ENCODE measurements at regions of chr4 and their contacts with region 1.

Region 1: GRCh38 chr4:82428969-82429727 is 1.1 kb downstream of the HNRNPDL start:
- DNase-seq: peak; percentile 96
- ATAC-seq: peak; percentile 55
- H3K4me3 Mint-ChIP-seq: peak overlapping the region; percentile 94
- H3K27ac Mint-ChIP-seq: peak overlapping the region; percentile 99
- H3K4me1 Mint-ChIP-seq: peaks cover 50% of the 10 kb centered on the region
- H3K27me3 Mint-ChIP-seq: no peaks in the 10 kb centered on the region

Region 2: DNA sequence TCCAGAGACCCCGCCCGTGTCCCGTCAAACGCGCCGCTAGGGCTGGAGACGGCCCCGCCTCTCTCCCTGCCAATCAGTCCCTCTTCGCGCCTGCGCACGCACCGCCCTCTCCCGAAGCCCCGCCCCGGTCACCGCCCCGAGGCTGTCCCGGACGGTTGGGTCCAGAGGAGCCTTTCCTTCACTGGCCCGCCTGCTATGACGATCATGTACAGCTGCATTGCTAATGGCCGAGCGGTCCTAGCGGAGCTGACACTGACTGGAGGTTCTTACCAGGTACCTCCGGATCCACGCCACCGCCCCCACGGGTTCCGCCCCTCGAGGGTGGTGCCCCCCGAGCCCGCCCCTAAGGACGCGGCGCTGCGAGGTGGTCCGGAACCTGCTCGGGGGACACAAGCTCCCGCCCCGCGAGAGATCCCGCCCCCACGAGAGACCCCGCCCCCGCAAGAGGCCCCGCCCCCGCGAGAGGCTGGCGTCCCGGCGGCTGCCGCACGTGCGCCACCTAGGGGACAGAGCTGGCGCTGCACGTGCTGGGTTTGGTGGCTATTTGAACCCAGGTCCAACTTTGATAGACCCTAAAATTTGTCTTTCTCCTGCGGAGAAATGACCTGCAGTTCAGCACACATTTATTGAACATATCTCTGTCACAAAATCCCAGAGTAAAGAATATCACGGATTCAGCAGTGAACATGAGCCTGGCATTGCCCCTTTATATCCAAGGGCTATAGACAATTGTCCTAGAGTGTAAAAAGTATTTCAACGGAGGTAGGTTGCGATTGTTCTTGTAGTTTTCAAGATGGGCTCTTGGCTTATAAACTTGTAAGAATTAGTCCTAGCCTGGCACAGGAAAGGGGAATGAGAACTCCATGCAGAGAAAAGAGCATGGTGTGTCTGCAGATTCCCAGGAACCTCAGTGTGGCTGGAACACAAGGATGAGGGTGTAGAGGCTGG is 144.0 kb before region 1 on chr4:
- CTCF ChIA-PET with region 1: interaction called, 5 read pairs
- POLR2A ChIA-PET with region 1: interaction called, 4 read pairs
- intact Hi-C with region 1: loop called (anchors 1 to 2 kb)
- DNase-seq: peak; percentile 100
- ATAC-seq: peak; percentile 99
- H3K4me3 Mint-ChIP-seq: peak overlapping the region; percentile 68
- H3K27ac Mint-ChIP-seq: peak overlapping the region; percentile 62
- H3K4me1 Mint-ChIP-seq: peaks cover 13% of the 10 kb centered on the region
- H3K27me3 Mint-ChIP-seq: no peaks in the 10 kb centered on the region

Region 3: GRCh38 chr4:82373816-82374625 is 55.1 kb before region 1 on chr4 and contains the start of gene HNRNPD:
- CTCF ChIA-PET with region 1: interaction called, 14 read pairs
- POLR2A ChIA-PET with region 1: interaction called, 38 read pairs
- intact Hi-C with region 1: loop called (anchors 1 kb)
- DNase-seq: peak; percentile 97
- ATAC-seq: peak; percentile 90
- H3K4me3 Mint-ChIP-seq: peak within 1 kb of the TSS; percentile 89
- H3K27ac Mint-ChIP-seq: peak within 1 kb of the TSS; percentile 99
- H3K4me1 Mint-ChIP-seq: peaks cover 34% of the 10 kb centered on the region
- H3K27me3 Mint-ChIP-seq: no peaks in the 10 kb centered on the region
- total RNA-seq, gene HNRNPD: 505 to 510 TPM

Region 4: GRCh38 chr4:82543124-82543523 is 114.0 kb after region 1 on chr4:
- CTCF ChIA-PET with region 1: no interaction called
- POLR2A ChIA-PET with region 1: no interaction called
- intact Hi-C with region 1: no loop called
- DNase-seq: no peak
- ATAC-seq: no peak
- H3K4me3 Mint-ChIP-seq: no peak overlapping the region
- H3K27ac Mint-ChIP-seq: no peak overlapping the region
- H3K4me1 Mint-ChIP-seq: no peaks in the 10 kb centered on the region
- H3K27me3 Mint-ChIP-seq: peaks cover 8% of the 10 kb centered on the region

Region 5: GRCh38 chr4:82890901-82891706 is 462.0 kb after region 1 on chr4 and contains the start of gene SEC31A:
- CTCF ChIA-PET with region 1: no interaction called
- POLR2A ChIA-PET with region 1: no interaction called
- intact Hi-C with region 1: loop called in 1 of 2 experiments (anchors 1 kb)
- DNase-seq: peak; percentile 99
- ATAC-seq: peak; percentile 94
- H3K4me3 Mint-ChIP-seq: peak within 1 kb of the TSS; percentile 81
- H3K27ac Mint-ChIP-seq: peak within 1 kb of the TSS; percentile 89
- H3K4me1 Mint-ChIP-seq: peaks cover 42% of the 10 kb centered on the region
- H3K27me3 Mint-ChIP-seq: no peaks in the 10 kb centered on the region
- total RNA-seq, gene SEC31A: 80.3 to 124 TPM

Region 6: DNA sequence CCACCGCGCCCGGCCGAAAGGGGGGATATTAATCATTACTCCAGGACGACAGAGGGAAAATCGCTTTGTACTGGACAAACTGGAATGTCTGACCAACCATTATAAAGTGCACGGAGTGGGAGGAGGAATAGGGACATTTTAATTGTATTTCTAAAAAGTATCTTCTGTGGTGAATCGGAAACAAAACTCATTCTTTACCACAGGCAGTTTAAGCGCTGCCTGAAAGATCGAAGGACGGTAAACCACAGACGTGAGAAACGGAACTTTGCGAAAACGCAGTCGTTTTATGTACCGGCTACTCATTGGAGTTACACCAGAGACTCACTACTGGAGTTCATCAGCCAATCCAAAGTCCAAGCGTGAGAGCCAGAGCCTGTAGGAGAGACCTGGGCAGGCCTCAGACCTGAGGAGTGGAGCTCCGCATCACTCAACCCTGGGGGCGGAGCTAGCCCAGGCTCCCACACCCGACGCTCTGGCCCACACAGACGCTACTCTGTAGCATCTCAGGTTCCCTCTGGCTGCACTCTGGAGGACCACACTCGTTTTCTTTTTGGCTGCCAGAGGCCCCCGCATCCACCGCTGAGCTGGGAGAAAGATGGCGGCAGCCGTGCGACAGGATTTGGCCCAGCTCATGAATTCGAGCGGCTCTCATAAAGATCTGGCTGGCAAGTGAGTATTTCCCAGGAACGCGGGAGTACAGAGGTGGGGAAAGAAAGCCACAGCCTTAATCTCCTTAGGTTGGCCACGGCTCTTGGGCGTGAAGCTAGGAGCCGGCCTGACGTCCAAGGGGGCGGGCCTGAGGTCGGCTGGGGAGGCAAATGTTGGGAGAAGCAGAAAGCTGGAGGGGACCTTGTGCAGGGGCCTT is 605.7 kb after region 1 on chr4 and contains the start of gene COPS4:
- CTCF ChIA-PET with region 1: no interaction called
- POLR2A ChIA-PET with region 1: interaction called, 3 read pairs
- intact Hi-C with region 1: loop called in 1 of 2 experiments (anchors 1 kb)
- DNase-seq: peak; percentile 97
- ATAC-seq: peak; percentile 97
- H3K4me3 Mint-ChIP-seq: peak within 1 kb of the TSS; percentile 91
- H3K27ac Mint-ChIP-seq: peak within 1 kb of the TSS; percentile 94
- H3K4me1 Mint-ChIP-seq: peaks cover 22% of the 10 kb centered on the region
- H3K27me3 Mint-ChIP-seq: no peaks in the 10 kb centered on the region
- total RNA-seq, gene COPS4: 35.7 to 35.9 TPM

Region 7: DNA sequence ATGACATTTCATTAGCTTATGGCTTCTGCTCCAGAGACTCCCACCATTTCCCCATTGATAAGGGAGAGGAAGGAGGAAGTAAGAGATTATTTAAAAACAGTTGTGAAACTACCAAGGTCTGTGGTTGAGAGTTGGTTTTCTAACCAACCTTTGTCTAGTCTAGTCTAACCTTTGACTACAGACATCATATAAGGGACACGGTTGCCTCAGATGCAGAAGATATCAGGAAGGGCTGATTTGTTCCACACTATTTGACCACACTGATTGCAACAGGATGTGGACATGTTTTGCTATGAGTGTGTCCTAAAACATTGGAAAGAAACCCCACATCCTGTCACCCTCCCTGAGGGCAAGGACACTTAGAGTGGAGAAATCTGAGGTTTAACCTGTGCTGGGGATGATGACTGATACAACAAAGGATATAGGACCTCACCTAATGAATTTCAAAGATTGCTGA is 802.5 kb after region 1 on chr4:
- CTCF ChIA-PET with region 1: no interaction called
- POLR2A ChIA-PET with region 1: no interaction called
- intact Hi-C with region 1: loop called in 1 of 2 experiments (anchors 10 kb)
- DNase-seq: peak; percentile 51
- ATAC-seq: peak; percentile 71
- H3K4me3 Mint-ChIP-seq: no peak overlapping the region
- H3K27ac Mint-ChIP-seq: peak overlapping the region; percentile 51
- H3K4me1 Mint-ChIP-seq: peaks cover 45% of the 10 kb centered on the region
- H3K27me3 Mint-ChIP-seq: peaks cover 23% of the 10 kb centered on the region

Region 8: GRCh38 chr4:83356899-83357661 is 927.9 kb after region 1 on chr4:
- CTCF ChIA-PET with region 1: no interaction called
- POLR2A ChIA-PET with region 1: no interaction called
- intact Hi-C with region 1: loop called in 1 of 2 experiments (anchors 10 kb)
- DNase-seq: peak; percentile 52
- ATAC-seq: peak; percentile 91
- H3K4me3 Mint-ChIP-seq: no peak overlapping the region
- H3K27ac Mint-ChIP-seq: peak overlapping the region; percentile 72
- H3K4me1 Mint-ChIP-seq: peaks cover 23% of the 10 kb centered on the region
- H3K27me3 Mint-ChIP-seq: no peaks in the 10 kb centered on the region